ENCODE measurements at regions of chr4 and their contacts with region 1.

Region 1: GRCh38 chr4:88613417-88613875 is 21.2 kb downstream of the HERC3 start:
- DNase-seq: peak in 12 of 14 experiments; percentile 20 to 90 (median 40)
- ATAC-seq: peak; percentile 95
- H3K4me3 ChIP-seq: peak overlapping the region; percentile 30
- H3K4me3 Mint-ChIP-seq: peak overlapping the region; percentile 80
- H3K27ac ChIP-seq: peak overlapping the region; percentile 80 to 87
- H3K27ac Mint-ChIP-seq: peak overlapping the region; percentile 95
- H3K4me1 ChIP-seq: peaks cover 44% of the 10 kb centered on the region
- H3K4me1 Mint-ChIP-seq: peaks cover 86% of the 10 kb centered on the region
- H3K27me3 ChIP-seq: no peaks in the 10 kb centered on the region
- H3K27me3 Mint-ChIP-seq: no peaks in the 10 kb centered on the region
- CTCF ChIP-seq: no peak

Region 2: GRCh38 chr4:88456757-88457306 is 156.6 kb before region 1 on chr4 and contains the start of gene HERC5:
- CTCF ChIA-PET with region 1: no interaction called
- POLR2A ChIA-PET with region 1: interaction called, 14 read pairs
- intact Hi-C with region 1: no loop called
- DNase-seq: peak; percentile 83 to 97 (median 90)
- ATAC-seq: peak; percentile 96
- H3K4me3 ChIP-seq: peak within 1 kb of the TSS; percentile 85
- H3K4me3 Mint-ChIP-seq: peak within 1 kb of the TSS; percentile 96
- H3K27ac ChIP-seq: peak within 1 kb of the TSS; percentile 6 to 65
- H3K27ac Mint-ChIP-seq: peak within 1 kb of the TSS; percentile 85
- H3K4me1 ChIP-seq: peaks cover 20% of the 10 kb centered on the region
- H3K4me1 Mint-ChIP-seq: peaks cover 42% of the 10 kb centered on the region
- H3K27me3 ChIP-seq: no peaks in the 10 kb centered on the region
- H3K27me3 Mint-ChIP-seq: no peaks in the 10 kb centered on the region
- CTCF ChIP-seq: peak; percentile 32
- total RNA-seq, gene HERC5: 23.6 to 23.9 TPM

Region 3: GRCh38 chr4:88503344-88503743 is 110.1 kb before region 1 on chr4:
- CTCF ChIA-PET with region 1: no interaction called
- POLR2A ChIA-PET with region 1: no interaction called
- intact Hi-C with region 1: no loop called
- DNase-seq: no peak
- ATAC-seq: no peak
- H3K4me3 ChIP-seq: no peak overlapping the region
- H3K4me3 Mint-ChIP-seq: no peak overlapping the region
- H3K27ac ChIP-seq: no peak overlapping the region
- H3K27ac Mint-ChIP-seq: no peak overlapping the region
- H3K4me1 ChIP-seq: no peaks in the 10 kb centered on the region
- H3K4me1 Mint-ChIP-seq: no peaks in the 10 kb centered on the region
- H3K27me3 ChIP-seq: no peaks in the 10 kb centered on the region
- H3K27me3 Mint-ChIP-seq: no peaks in the 10 kb centered on the region
- CTCF ChIP-seq: no peak

Region 4: GRCh38 chr4:88591787-88592599 is 21.5 kb before region 1 on chr4 and contains the start of gene HERC3:
- CTCF ChIA-PET with region 1: interaction called, 9 read pairs
- POLR2A ChIA-PET with region 1: interaction called, 152 read pairs
- intact Hi-C with region 1: loop called (anchors 1 to 2 kb)
- DNase-seq: peak; percentile 76 to 95 (median 86)
- ATAC-seq: peak; percentile 84
- H3K4me3 ChIP-seq: peak within 1 kb of the TSS; percentile 96
- H3K4me3 Mint-ChIP-seq: peak within 1 kb of the TSS; percentile 100
- H3K27ac ChIP-seq: peak within 1 kb of the TSS; percentile 83 to 93
- H3K27ac Mint-ChIP-seq: peak within 1 kb of the TSS; percentile 99
- H3K4me1 ChIP-seq: peaks cover 23% of the 10 kb centered on the region
- H3K4me1 Mint-ChIP-seq: peaks cover 60% of the 10 kb centered on the region
- H3K27me3 ChIP-seq: no peaks in the 10 kb centered on the region
- H3K27me3 Mint-ChIP-seq: no peaks in the 10 kb centered on the region
- CTCF ChIP-seq: no peak
- total RNA-seq, gene HERC3: 63.1 to 66.4 TPM

Region 5: DNA sequence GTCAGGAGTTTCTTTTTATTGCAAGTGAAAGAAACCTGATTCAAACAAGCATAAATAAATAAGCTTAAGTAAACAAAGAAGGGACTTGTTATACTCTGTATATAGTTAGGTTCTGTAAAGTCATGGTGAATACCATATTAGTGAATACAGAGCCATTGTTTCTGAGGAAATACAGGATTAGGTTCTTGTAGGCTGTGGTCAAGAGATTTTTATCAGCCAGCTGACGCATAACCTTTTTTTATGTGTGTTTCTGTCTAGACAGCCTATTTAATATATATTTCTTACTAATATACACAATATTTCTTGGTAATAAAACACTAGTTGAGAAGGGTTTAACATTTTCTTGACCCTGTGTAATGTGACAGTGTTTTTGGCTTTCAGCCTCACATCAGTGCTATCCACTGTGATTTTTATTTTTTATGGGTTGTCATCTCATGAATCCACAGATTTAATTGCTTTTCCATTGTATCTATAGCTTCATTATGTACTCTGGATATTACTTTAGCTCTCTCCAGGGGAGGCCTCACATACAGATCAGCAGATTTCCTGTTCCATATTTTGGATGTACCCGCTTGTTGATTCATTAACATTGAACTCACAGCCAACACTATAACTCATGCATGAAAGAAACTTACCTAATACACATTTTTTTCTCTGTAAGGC is 13.1 kb before region 1 on chr4:
- CTCF ChIA-PET with region 1: interaction called, 8 read pairs
- POLR2A ChIA-PET with region 1: interaction called, 152 read pairs
- intact Hi-C with region 1: loop called in 1 of 2 experiments (anchors 2 kb)
- DNase-seq: peak in 1 of 14 experiments; percentile 53
- ATAC-seq: peak; percentile 42
- H3K4me3 ChIP-seq: no peak overlapping the region
- H3K4me3 Mint-ChIP-seq: peak overlapping the region; percentile 79
- H3K27ac ChIP-seq: no peak overlapping the region
- H3K27ac Mint-ChIP-seq: peak overlapping the region; percentile 77
- H3K4me1 ChIP-seq: peaks cover 18% of the 10 kb centered on the region
- H3K4me1 Mint-ChIP-seq: peaks cover 80% of the 10 kb centered on the region
- H3K27me3 ChIP-seq: no peaks in the 10 kb centered on the region
- H3K27me3 Mint-ChIP-seq: no peaks in the 10 kb centered on the region
- CTCF ChIP-seq: no peak

Region 6: GRCh38 chr4:88646528-88647280 is 33.3 kb after region 1 on chr4:
- CTCF ChIA-PET with region 1: no interaction called
- POLR2A ChIA-PET with region 1: interaction called, 3 read pairs
- intact Hi-C with region 1: loop called in 1 of 2 experiments (anchors 5 kb)
- DNase-seq: no peak
- ATAC-seq: no peak
- H3K4me3 ChIP-seq: no peak overlapping the region
- H3K4me3 Mint-ChIP-seq: no peak overlapping the region
- H3K27ac ChIP-seq: no peak overlapping the region
- H3K27ac Mint-ChIP-seq: peak overlapping the region; percentile 56
- H3K4me1 ChIP-seq: peaks cover 6% of the 10 kb centered on the region
- H3K4me1 Mint-ChIP-seq: peaks cover 80% of the 10 kb centered on the region
- H3K27me3 ChIP-seq: no peaks in the 10 kb centered on the region
- H3K27me3 Mint-ChIP-seq: no peaks in the 10 kb centered on the region
- CTCF ChIP-seq: no peak

Region 7: GRCh38 chr4:88659055-88659889 is 45.8 kb after region 1 on chr4:
- CTCF ChIA-PET with region 1: interaction called, 8 read pairs
- POLR2A ChIA-PET with region 1: interaction called, 6 read pairs
- intact Hi-C with region 1: loop called in 1 of 2 experiments (anchors 5 kb)
- DNase-seq: peak in 12 of 14 experiments; percentile 11 to 68 (median 28)
- ATAC-seq: peak; percentile 88
- H3K4me3 ChIP-seq: no peak overlapping the region
- H3K4me3 Mint-ChIP-seq: no peak overlapping the region
- H3K27ac ChIP-seq: no peak overlapping the region
- H3K27ac Mint-ChIP-seq: peak overlapping the region; percentile 34
- H3K4me1 ChIP-seq: no peaks in the 10 kb centered on the region
- H3K4me1 Mint-ChIP-seq: peaks cover 33% of the 10 kb centered on the region
- H3K27me3 ChIP-seq: no peaks in the 10 kb centered on the region
- H3K27me3 Mint-ChIP-seq: no peaks in the 10 kb centered on the region
- CTCF ChIP-seq: peak; percentile 68

Region 8: GRCh38 chr4:88759039-88759894 is 145.8 kb after region 1 on chr4:
- CTCF ChIA-PET with region 1: no interaction called
- POLR2A ChIA-PET with region 1: no interaction called
- intact Hi-C with region 1: no loop called
- DNase-seq: no peak
- ATAC-seq: no peak
- H3K4me3 ChIP-seq: no peak overlapping the region
- H3K4me3 Mint-ChIP-seq: no peak overlapping the region
- H3K27ac ChIP-seq: no peak overlapping the region
- H3K27ac Mint-ChIP-seq: no peak overlapping the region
- H3K4me1 ChIP-seq: no peaks in the 10 kb centered on the region
- H3K4me1 Mint-ChIP-seq: no peaks in the 10 kb centered on the region
- H3K27me3 ChIP-seq: no peaks in the 10 kb centered on the region
- H3K27me3 Mint-ChIP-seq: no peaks in the 10 kb centered on the region
- CTCF ChIP-seq: no peak

Measured in CD4-positive, alpha-beta T cell (primary cell).